ENCODE measurements at regions of chr1 and their contacts with region 1.

Region 1: DNA sequence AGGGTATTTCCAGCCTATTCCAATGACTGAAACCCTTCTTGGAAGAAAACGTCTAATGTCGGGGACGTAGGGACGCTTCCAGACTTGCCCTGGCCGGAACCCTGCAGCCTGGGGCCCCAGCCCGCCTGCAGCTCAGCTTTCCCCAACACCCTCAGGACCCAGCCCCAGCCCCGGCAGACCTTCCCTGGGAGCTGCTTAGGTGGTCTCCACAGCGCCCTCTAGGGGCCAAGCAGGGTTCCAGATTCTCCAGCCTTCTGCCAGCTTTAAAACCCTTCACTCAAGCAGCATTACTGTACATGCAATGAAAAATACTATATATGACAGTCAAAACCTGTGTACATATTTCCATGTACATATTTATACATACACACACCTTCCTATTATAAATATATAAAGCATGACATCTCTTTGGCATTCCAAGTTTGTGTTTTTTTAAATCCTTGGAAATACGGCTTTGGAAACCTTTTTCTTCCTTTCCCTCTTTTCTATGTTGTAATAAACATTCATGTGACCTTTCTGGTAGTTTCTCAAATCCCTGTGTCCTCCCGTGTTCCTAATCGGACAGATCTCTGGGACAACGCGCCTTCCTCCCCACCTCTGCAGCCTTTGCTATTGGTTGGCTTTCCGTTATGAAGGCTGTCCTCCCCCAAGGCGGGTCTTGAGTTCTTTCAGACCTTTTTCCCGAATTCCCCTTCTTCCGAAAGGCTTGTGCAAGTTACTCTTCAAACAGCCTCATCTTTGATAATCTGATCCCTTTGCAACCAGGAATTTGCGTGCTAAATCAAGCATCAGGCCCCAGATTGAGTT is 60.3 kb downstream of the STUM start:
- DNase-seq: peak; percentile 80

Region 2: DNA sequence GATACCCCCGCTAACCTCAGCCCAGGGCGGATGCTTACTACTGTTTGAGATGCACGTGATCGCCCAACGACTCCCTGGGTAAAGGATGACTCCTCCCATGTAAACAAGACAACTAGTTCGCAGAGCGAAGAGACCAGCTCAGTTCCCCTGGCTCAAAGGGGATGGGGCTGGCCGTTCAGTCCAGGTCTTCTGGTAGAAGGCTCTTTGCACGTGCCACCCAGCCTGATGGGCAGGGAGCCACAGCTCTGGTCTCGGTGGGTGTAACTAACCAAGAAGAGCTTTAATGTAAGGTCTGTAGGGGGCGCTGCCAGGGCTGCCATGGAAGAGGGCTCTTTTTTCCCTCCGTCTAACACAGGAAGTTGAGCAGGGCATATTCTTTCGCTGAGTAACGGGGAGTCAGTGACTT is 151.6 kb before region 1 on chr1:
- in situ Hi-C with region 1: no loop called
- DNase-seq: peak; percentile 18

Region 3: DNA sequence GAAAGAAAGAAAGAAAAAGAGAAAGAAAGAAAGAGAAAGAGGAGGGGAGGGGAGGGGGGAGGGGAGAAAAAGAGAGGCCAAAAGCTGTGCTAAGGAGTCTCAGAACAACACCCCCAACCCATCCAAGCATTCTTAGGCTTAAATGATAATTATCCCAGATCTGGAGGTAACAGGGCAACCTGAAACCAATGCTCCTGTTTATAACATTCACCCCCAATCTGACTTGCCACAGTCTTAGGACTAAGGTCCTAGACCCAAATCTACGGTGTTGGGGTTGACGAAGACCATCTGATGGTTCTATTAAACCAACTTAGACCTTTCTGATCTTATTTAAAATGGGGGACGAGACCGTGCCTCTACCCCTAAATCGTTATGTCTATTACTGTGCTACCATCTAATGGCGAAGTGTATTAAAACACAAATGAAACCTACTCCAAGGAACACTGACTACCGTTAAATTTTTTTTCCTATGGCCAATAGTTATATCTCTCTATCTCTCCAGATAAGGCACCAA is 828.6 kb after region 1 on chr1:
- in situ Hi-C with region 1: loop called (anchors 25 kb)
- DNase-seq: peak; percentile 70